ENCODE measurements at regions of chr20 and their contacts with region 1.

Region 1: DNA sequence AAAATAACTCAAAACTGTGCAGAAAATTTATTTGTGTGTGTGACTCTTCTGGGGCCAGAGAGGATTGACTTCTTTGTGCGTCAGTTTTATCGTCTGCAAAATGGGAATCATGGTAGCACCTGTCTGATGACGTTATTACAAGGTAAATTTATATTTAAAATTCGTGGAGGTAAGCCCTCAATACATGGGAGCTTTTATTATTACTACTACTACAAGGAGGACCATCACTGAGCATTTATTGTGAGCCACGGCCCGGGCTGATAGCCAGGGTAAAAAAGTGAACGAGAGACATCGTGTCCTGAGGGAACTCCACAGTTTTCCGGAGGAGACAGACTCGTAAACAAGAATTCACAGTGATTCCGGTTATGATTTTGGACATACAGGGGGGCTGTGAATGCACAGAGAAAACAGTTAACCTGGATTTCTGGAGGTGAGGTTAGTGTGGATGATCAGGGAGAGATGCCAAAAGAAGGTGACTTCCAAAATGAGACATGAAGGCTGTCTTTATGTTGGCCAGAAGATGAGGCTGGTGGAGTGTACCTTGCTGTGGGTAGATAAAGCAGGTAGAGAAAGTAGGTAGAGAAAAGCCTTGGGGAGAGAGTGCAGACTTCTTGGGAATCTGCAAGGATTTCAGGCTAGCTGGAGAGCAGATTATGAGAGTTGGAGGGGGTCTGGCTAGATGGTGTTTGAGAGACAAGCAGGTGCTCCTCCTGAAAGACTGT is 10.6 kb upstream of the SERINC3 start:
- H3K4me3 Mint-ChIP-seq: no peak overlapping the region
- H3K27ac Mint-ChIP-seq: no peak overlapping the region
- H3K4me1 Mint-ChIP-seq: peaks cover 15% of the 10 kb centered on the region
- H3K27me3 Mint-ChIP-seq: peaks cover 15% of the 10 kb centered on the region

Region 2: DNA sequence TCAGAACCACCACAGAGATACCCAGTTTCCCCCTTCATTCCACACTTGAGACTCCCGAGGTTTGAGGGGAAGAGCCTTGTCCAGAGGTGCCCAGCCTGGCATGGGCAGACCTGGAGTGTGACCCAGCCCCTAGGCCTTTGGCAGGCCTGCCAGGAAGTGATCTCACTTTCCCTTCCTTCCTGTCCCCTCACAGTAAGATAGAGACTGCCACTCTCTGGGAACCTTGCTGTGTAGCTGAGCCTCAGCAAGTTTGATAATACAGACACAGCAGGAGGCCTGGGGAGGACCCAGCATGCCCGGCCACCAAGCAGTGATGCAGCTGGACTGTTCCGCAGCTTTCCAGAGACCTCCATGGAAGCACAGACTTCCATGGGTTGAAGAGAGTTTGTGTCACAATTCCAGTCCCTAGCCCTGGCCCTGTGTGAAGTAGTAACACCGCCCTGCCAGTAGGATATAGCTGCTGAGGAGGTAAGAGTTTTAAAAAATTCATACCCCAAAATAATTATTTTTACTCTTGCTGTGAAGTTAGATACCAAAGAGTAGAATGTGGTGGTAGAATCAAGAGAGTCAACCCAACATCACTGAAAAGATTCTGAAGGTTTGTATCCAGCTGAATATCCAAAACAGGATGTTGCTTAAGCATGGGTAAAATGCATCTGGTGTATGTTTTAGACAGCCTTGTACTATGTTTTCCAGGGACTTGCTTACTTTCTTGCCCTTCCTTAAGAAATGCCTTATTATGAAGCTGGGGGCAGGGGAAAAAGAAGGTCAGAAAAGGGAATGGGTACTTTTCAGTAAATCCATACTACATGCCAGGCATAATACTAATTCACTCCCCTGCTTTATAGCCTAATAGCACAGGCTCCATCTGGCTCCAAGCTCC is 66.2 kb after region 1 on chr20:
- intact Hi-C with region 1: loop called (anchors 10 kb)
- H3K4me3 Mint-ChIP-seq: peak overlapping the region; percentile 23
- H3K27ac Mint-ChIP-seq: peak overlapping the region; percentile 75
- H3K4me1 Mint-ChIP-seq: peaks cover 66% of the 10 kb centered on the region
- H3K27me3 Mint-ChIP-seq: no peaks in the 10 kb centered on the region